ENCODE measurements at regions of chr12 and their contacts with region 1.

Region 1: GRCh38 chr12:48142818-48143674 is 14.3 kb downstream of the ASB8 start:
- DNase-seq: peak in 1 of 2 experiments; percentile 51
- H3K4me3 ChIP-seq: peak overlapping the region in 1 of 4 experiments; percentile 34; a peak in 2 of 8 replicates
- H3K27ac ChIP-seq: peak overlapping the region; percentile 56; the same call in 1 of the 2 replicates
- H3K4me1 ChIP-seq: peaks cover 9 to 24% (median 18%) of the 10 kb centered on the region in 4 experiments
- H3K27me3 ChIP-seq: no peaks in the 10 kb centered on the region
- CTCF ChIP-seq: no peak
- EP300 ChIP-seq: no peak
- POLR2A ChIP-seq: 0 out of 3 replicates have a peak, but pooled peaks of 1 of the 2 experiments have one; percentile 38
- RAD21 ChIP-seq: no peak

Region 2: DNA sequence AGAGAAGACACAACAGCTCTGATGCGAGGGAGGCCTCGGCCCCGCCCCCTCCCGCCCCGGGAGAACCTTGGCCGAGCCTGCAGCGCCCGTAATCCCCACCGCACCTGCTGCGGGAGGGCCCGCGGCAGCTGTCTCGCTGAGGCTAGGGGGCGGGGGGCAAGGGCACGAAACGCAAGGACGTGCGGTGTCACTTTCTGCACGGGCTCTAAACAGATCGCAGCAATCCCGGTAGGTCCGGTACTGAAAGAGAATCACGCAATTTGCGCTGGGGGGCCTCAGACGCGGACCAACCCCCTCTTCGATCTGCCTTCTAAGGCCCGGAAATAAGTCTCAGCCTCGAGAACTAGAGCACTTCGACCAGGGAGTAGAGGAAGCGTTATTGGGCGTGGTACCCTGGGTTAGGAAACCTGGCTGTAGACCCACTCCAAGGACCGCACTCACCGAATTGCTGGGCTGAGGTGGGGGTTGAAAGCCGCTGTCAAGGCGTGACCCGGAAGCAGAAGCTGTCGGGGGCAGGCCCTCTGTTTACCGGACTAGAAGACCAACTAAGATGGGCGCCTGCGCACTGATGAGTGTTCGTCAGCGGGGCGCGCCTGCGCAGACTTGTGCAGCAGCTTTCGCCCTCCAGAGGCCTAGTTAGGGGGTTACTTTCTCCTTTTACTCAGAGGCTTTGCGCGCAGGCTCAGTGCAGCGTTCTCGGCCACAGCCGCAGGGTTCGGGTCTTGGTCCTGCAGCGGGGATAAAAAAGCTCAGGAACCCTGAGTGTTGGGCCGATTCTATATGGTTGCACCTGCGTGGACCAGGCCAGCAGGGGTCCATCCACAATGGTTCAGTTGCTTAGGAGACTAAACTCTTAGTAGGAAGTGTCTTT is 14.2 kb after region 1 on chr12 and contains the start of gene ASB8:
- CTCF ChIA-PET with region 1: interaction called, 16 read pairs
- POLR2A ChIA-PET with region 1: interaction called, 14 read pairs
- DNase-seq: peak; percentile 96 to 99
- H3K4me3 ChIP-seq: peak within 1 kb of the TSS; percentile 86 to 94 (median 92)
- H3K27ac ChIP-seq: no peak within 1 kb of the TSS
- H3K4me1 ChIP-seq: peaks cover 0 to 5% (median under 1%) of the 10 kb centered on the region in 4 experiments; a peak in 2 of 7 replicates
- H3K27me3 ChIP-seq: no peaks in the 10 kb centered on the region
- CTCF ChIP-seq: peak; percentile 44 to 60 (median 46)
- EP300 ChIP-seq: no peak
- POLR2A ChIP-seq: peak in 1 of 2 experiments; percentile 64; a peak in 1 of 3 replicates
- RAD21 ChIP-seq: peak; percentile 22 to 40; a peak in 3 of 4 replicates
- total RNA-seq, gene ASB8: 8.1 and 8.3 TPM in 2 replicates